Heart right ventricle (tissue), 16 donors: ENCODE measurements at regions of chr14 and their contacts with region 1.

Region 1: GRCh38 chr14:59422069-59422881 is 42.9 kb downstream of the GPR135 start:
- DNase-seq: no peak
- ATAC-seq: peak in 3 of 8 donors; percentile 9 to 18 (median 13)
- H3K4me3 ChIP-seq: no peak overlapping the region
- H3K27ac ChIP-seq: peak overlapping the region in 6 of 10 donors; percentile 5 to 32 (median 28)
- H3K4me1 ChIP-seq: peaks cover 0 to 71% (median 42%) of the 10 kb centered on the region in 9 donors
- H3K27me3 ChIP-seq: no peaks in the 10 kb centered on the region
- CTCF ChIP-seq: peak in 6 of 9 donors; percentile 17 to 56 (median 38)

Region 2: DNA sequence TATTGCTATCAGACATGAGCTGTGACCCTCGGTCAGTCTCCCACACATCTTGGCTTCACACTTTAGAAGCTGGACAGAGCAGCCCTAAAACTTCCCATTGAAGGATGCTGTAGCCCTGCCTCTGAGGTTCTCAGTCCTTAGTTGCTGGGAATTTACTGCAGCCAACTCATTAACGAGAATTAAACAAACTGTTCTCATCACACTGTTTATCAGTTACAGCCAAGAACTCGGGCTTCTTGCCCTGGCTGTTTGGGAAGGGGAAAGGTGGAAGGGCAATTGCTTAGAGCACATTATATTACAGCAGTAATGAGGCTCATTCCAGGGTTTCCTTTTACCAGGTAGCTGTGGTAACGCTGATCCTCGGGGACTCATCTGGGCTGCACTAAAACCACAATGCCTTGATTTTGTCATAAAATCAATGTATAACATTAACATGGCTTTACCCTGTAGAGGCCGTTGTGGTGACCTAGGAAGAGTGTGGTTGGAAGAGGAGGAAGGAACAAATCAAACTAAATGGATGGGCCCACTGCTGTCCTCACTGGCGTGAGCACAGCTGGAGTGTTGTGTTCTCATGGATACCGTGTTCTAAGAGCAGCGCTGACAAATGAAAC is 44.2 kb before region 1 on chr14:
- intact Hi-C with region 1: loop called in 3 of 10 experiments (anchors 5 kb)
- DNase-seq: peak in 1 of 2 donors; percentile 20
- ATAC-seq: peak; percentile 57 to 84 (median 74)
- H3K4me3 ChIP-seq: no peak overlapping the region
- H3K27ac ChIP-seq: peak overlapping the region in 8 of 10 donors; percentile 3 to 64 (median 54)
- H3K4me1 ChIP-seq: peaks cover 2 to 38% (median 18%) of the 10 kb centered on the region in 9 donors
- H3K27me3 ChIP-seq: no peaks in the 10 kb centered on the region
- CTCF ChIP-seq: no peak

Region 3: DNA sequence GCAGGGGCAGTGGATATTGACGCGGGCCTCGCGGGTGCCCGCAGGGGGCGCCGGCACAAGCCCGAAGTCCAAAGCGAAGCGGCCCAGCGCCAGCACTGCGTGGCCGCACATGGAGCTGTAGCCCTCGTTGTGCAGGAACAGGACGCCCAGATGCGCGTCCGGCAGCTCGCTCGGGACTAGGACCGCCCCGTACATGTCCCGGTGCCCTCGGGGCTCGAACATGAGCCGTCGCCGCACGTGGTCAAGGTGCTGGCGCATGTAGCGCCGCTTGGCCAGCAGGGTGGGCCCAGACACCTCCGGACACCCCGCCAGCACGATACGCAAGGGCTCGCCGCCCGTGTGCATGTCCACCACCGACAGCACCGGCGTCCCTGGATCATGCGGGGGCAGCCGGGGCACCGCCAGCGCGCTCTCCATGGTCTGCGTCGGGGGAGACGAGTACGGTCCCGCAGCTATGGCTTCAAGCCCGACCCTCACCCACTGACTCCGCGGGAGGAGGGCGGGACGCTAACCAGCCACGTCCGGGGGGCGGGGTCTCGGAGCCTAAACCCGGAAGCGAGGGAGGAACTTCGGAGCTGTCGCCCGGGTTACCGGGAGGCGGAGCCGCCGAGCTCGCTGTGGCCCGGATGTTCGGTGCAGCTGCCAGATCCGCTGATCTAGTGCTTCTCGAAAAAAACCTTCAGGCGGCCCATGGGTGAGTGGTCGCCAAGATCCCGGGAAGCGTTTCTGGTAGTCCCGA is 61.8 kb after region 1 on chr14 and contains the starts of genes JKAMP and L3HYPDH:
- intact Hi-C with region 1: no loop called
- DNase-seq: peak; percentile 98
- ATAC-seq: peak; percentile 97 to 99 (median 98)
- H3K4me3 ChIP-seq: peak within 1 kb of the TSS; percentile 78 to 96 (median 90)
- H3K27ac ChIP-seq: peak within 1 kb of the TSS; percentile 92 to 98 (median 96)
- H3K4me1 ChIP-seq: peaks cover 3 to 82% (median 55%) of the 10 kb centered on the region in 9 donors
- H3K27me3 ChIP-seq: no peaks in the 10 kb centered on the region
- CTCF ChIP-seq: peak; percentile 49 to 80 (median 71)
- total RNA-seq, gene JKAMP: 19.6 to 27.7 (median 26.4) TPM
- total RNA-seq, gene L3HYPDH: 7.5 to 16.6 (median 9.8) TPM